ENCODE measurements at regions of chr14 and their contacts with region 1.

Region 1: DNA sequence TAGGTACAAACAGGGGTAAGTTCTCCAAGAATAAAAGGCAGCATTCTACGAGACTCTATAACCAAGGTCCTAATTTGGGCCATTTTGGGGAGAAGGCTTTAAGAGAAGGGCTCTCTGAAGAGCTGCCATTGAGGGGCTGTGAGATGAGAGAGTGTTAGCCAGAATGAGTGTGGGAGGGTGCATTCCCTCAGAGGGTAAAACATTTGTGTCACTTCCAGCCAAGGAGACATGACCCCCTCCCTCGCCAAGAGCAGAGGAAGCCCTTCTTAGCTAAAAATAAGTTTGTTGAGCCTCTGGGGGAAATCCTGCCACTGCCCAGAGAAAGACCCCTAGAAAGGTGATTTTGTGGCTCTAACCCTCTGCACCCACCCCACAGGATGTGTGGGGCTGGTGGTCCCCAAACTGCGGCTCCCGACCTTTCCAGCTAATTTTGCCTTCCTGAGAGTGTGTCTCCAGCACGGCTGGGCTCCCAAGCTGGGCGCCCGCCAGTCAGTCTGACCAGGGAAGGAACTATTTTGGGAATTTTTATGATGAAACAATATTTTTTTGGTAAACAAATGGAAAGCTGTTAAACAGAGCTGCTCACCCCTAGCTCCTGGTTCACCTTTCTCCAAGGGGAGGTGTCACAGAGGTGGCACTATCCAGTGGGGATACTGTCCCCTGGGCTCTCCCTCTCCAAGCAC is 65.9 kb upstream of the JDP2 start:
- DNase-seq: no peak
- ATAC-seq: peak; percentile 49
- H3K4me3 ChIP-seq: no peak overlapping the region
- H3K27ac ChIP-seq: no peak overlapping the region
- H3K4me1 ChIP-seq: peaks cover 4% of the 10 kb centered on the region; the same call in 1 of the 2 replicates
- H3K27me3 ChIP-seq: peaks cover 42% of the 10 kb centered on the region
- CTCF ChIP-seq: no peak
- POLR2A ChIP-seq: no peak
- RAD21 ChIP-seq: no peak

Region 2: GRCh38 chr14:75283882-75284563 is 77.9 kb before region 1 on chr14:
- CTCF ChIA-PET with region 1: no interaction called
- POLR2A ChIA-PET with region 1: no interaction called
- dilution Hi-C with region 1: no loop called
- in situ Hi-C with region 1: no loop called
- intact Hi-C with region 1: loop called (anchors 2 kb)
- DNase-seq: peak; percentile 51
- ATAC-seq: no peak
- H3K4me3 ChIP-seq: no peak overlapping the region
- H3K27ac ChIP-seq: no peak overlapping the region
- H3K4me1 ChIP-seq: peaks cover 8% of the 10 kb centered on the region
- H3K27me3 ChIP-seq: no peaks in the 10 kb centered on the region
- CTCF ChIP-seq: no peak
- POLR2A ChIP-seq: no peak
- RAD21 ChIP-seq: no peak

Region 3: DNA sequence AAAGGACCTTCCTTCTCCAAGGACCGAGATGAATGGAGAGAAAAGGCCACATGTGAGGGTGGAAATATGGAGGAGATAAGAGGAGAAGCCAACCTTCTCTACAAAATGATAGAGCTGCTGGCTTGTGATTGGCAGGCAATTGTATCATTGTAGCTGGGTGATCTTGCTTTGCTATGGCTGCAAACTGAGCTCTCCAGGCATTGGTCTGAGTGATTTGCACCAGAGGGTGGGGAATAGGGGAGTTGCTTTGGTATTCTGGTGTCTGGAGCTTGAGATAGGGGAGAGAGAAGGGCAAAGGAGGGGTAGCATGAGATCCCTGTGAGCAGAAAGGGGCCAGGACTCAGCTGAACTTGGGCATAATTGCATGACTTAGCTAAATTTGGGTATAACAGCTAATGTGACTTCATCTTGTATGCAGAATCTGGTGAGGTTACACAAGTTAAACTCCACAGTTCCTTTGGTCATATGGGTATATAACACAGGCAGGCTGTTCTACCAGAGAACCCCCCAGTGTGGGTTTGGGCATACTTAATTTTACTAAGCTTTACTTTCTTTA is 11.3 kb before region 1 on chr14:
- CTCF ChIA-PET with region 1: no interaction called
- POLR2A ChIA-PET with region 1: no interaction called
- dilution Hi-C with region 1: no loop called
- in situ Hi-C with region 1: no loop called
- intact Hi-C with region 1: no loop called
- DNase-seq: no peak
- ATAC-seq: no peak
- H3K4me3 ChIP-seq: no peak overlapping the region
- H3K27ac ChIP-seq: no peak overlapping the region
- H3K4me1 ChIP-seq: peaks cover 11% of the 10 kb centered on the region; the same call in 1 of the 2 replicates
- H3K27me3 ChIP-seq: peaks cover 33% of the 10 kb centered on the region
- CTCF ChIP-seq: no peak
- POLR2A ChIP-seq: no peak
- RAD21 ChIP-seq: no peak

Region 4: GRCh38 chr14:75440733-75441477 is 79.0 kb after region 1 on chr14:
- CTCF ChIA-PET with region 1: no interaction called
- POLR2A ChIA-PET with region 1: no interaction called
- dilution Hi-C with region 1: no loop called
- in situ Hi-C with region 1: no loop called
- intact Hi-C with region 1: no loop called
- DNase-seq: peak; percentile 94
- ATAC-seq: peak; percentile 87
- H3K4me3 ChIP-seq: no peak overlapping the region
- H3K27ac ChIP-seq: peak overlapping the region; percentile 66; the same call in 1 of the 2 replicates
- H3K4me1 ChIP-seq: peaks cover 24% of the 10 kb centered on the region
- H3K27me3 ChIP-seq: no peaks in the 10 kb centered on the region
- CTCF ChIP-seq: no peak
- POLR2A ChIP-seq: no peak
- RAD21 ChIP-seq: 0 out of 2 replicates have a peak, but pooled peaks have one; percentile 8

Measured in IMR-90 (cell line).